Activated B cell treated with CpG ODN at 0.5 μM for 24 hours (primary cell): ENCODE measurements at regions of chr16 and their contacts with region 1.

Region 1: DNA sequence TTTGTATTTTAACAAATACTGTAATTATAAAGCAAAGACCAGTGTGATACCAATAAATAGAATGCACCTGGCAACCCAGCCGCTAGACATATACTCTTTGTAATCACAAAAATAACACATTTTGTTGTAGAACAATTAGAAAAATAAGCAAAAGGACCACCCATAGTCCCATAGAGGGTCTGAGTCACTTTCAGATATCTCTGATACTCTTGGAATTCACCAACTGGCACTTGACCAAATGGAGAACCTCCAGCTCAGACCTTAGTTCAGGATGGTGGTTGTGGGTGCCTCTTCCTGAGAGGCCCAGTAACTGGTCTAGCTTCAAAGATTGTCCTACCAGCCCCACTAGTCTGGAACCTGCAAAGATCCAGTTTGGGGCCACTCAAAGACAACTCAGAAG is 789 bp upstream of the TERF2 start:
- DNase-seq: no peak
- ATAC-seq: no peak
- H3K4me3 Mint-ChIP-seq: peak overlapping the region; percentile 90
- H3K27ac Mint-ChIP-seq: peak overlapping the region; percentile 89
- H3K4me1 Mint-ChIP-seq: peaks cover 36% of the 10 kb centered on the region
- H3K27me3 Mint-ChIP-seq: no peaks in the 10 kb centered on the region
- CTCF ChIP-seq: no peak

Region 2: DNA sequence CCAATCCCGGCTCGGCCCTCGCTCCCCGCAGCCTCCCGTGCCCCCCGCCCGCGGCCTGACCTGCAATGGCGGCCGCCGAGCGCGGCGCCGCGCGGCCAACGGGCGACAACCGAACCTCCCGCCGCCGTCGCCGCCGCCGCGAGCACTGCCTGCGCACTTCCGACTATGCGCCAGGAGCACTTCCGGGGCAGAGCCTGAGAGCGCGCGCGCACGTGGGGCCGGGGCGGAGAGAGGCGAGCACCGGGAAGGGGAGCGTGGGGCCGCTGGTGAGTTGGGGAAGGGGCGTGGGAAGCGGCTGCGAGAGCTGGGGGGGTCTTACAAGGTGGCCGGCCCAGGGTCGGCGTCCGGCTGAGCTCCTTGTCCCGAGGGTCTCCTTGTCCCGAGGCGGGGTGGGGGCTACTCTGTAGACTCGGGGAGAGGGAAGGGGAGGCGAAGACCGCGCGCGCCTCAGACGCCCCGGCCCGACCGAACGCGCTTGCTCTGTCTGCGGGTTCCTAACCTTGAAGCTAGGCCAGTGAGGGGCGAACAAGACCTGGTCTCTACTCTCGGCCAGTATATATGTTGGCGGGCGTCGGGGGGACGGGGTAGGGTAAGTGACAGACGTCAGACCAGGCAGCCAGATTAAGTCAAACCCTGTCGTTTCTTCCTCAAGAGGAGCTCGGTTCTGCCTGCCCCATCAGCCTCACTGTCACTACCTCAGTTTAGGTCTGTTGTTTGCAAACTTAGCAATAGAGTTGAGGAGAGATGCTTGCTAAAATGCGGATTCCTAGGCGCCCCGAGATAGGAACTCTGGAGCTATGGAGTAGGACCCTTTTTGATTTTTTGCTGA is 254.0 kb before region 1 on chr16 and contains the starts of genes CHTF8 and UTP4:
- CTCF ChIA-PET with region 1: no interaction called
- POLR2A ChIA-PET with region 1: no interaction called
- intact Hi-C with region 1: loop called (anchors 5 kb)
- DNase-seq: peak; percentile 89
- ATAC-seq: peak; percentile 85
- H3K4me3 Mint-ChIP-seq: peak within 1 kb of the TSS; percentile 94
- H3K27ac Mint-ChIP-seq: peak within 1 kb of the TSS; percentile 85
- H3K4me1 Mint-ChIP-seq: peaks cover 47% of the 10 kb centered on the region
- H3K27me3 Mint-ChIP-seq: no peaks in the 10 kb centered on the region
- CTCF ChIP-seq: no peak
- total RNA-seq, gene CHTF8: 134 and 143 TPM in 2 replicates
- total RNA-seq, gene UTP4: 53.5 and 55.3 TPM in 2 replicates

Region 3: DNA sequence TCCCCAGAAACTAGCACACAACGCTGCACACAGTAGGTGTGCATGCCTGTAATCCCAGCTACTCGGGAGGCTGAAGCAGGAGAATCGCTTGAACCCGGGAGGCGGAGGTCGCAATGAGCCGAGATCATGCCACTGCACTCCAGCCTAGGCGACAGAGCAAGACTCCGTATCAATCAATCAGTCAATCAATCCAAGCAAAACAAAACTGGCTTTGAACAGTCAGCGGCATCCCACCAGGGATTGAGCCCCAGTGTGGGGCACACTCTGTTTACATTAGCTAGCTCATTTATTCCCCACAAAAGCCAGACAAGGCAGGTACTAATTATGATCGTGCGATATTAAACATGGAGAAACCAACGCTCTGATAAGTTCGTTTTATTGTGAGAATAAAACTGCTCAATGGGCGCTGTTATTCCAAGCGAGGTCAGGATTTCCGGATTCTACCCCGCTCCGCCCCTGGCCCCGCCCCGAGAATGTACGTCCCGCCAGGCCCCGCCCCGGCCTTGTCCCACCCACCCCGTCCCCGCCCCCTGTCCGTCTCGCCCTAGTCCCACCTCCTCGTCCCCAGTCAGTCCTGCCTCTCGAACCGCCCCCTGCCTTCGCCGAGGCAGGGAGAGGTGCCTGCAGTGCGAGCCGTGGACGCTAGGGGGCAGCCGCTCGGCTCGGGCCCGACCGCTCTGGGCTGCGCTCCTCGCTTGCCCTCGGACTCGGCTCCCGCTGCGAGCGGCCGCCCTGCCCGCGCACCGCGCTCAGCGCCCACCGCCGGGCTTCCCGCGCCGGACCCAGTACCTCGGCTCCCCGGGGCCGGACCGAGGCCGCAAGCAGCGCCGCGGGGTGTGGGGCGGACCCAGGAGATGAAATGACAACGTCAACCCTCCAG is 75.7 kb before region 1 on chr16 and contains the start of gene VPS4A:
- CTCF ChIA-PET with region 1: no interaction called
- POLR2A ChIA-PET with region 1: no interaction called
- intact Hi-C with region 1: loop called (anchors 1 kb)
- DNase-seq: peak; percentile 99
- ATAC-seq: peak; percentile 98
- H3K4me3 Mint-ChIP-seq: peak within 1 kb of the TSS; percentile 98
- H3K27ac Mint-ChIP-seq: peak within 1 kb of the TSS; percentile 91
- H3K4me1 Mint-ChIP-seq: peaks cover 27% of the 10 kb centered on the region
- H3K27me3 Mint-ChIP-seq: no peaks in the 10 kb centered on the region
- CTCF ChIP-seq: no peak
- total RNA-seq, gene VPS4A: 34.2 and 41.7 TPM in 2 replicates

Region 4: DNA sequence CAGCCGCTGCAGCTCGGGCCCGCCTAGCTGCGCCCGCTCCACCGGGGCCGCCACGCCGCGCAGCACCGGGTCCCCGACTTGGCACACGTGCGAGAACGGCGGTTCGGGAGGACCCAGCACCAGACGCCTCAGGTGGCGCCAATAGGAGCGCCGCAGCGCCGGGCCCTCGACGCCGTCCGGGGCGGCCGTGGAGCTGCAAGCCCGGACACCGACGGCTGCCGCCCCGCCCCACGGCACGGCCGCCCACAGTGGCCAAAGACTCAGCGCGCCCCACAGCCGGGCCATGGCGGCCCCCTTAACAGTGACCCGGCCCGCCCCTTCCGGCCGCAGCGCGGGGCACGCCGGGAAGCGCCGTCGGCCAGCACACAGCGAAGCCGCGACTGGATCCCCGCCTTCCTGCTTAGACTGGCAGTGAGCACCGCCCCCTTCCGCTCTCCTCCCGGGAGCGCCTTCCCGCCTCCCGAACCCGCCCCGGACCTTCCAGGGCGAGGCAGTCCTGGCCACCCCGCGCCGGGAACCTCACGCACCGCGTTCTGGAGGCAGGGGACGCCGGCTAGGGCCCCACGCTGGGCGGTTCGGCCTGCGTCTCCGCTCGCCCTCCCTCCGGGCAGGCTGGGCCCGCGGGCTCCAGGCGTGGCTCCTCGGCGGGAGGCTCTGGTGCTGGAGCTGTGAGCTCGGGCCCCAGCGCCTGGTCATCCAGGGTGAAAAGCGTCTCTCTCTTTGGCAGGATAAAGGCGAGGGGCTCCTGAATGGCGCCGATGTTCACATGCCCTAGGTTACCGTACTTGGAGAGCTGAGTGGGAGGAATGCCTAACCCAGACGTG is 56.1 kb before region 1 on chr16 and contains the start of gene PDF:
- CTCF ChIA-PET with region 1: no interaction called
- POLR2A ChIA-PET with region 1: interaction called, 3 read pairs
- intact Hi-C with region 1: loop called (anchors 1 kb)
- DNase-seq: peak; percentile 85
- ATAC-seq: peak; percentile 96
- H3K4me3 Mint-ChIP-seq: peak within 1 kb of the TSS; percentile 84
- H3K27ac Mint-ChIP-seq: peak within 1 kb of the TSS; percentile 71
- H3K4me1 Mint-ChIP-seq: peaks cover 38% of the 10 kb centered on the region
- H3K27me3 Mint-ChIP-seq: no peaks in the 10 kb centered on the region
- CTCF ChIP-seq: no peak
- total RNA-seq, gene PDF: 11.1 and 15.3 TPM in 2 replicates

Region 5: DNA sequence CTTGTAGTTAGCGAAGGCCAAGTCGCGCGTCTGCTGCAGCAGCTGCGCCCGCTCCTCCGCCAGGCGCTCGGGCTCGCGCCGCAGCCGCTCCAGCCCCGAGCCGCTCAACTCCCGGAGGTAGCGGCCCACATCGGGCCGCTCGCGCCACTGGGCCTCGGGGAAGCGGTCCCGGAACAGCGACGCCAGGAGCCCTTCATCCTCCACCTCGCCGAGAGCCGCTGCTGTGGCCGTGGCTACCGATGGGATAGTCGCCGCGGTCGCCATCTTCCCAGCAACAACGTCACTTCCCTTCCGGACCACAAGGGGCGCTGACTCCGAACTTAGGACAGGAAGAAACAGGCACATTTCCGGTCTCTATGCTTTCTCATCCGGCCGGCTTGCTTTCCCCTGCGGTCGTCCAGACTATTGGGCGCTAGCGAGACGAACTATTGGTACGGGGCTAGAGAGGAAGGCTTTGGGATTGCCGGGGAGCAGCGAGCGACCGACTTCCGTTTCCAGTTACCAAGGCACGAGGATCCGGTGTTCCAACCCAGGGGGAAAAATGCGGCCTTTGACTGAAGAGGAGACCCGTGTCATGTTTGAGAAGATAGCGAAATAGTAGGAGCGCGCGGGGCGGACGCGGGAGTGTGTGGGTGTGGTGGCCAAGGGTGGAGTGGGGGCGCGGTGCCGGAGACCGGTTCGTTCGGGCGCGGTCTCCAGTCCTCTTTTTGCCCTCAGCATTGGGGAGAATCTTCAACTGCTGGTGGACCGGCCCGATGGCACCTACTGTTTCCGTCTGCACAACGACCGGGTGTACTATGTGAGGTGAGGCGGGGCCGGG is 47.1 kb before region 1 on chr16 and contains the starts of genes COG8 and NIP7:
- CTCF ChIA-PET with region 1: no interaction called
- POLR2A ChIA-PET with region 1: interaction called, 8 read pairs
- intact Hi-C with region 1: loop called (anchors 1 kb)
- DNase-seq: peak; percentile 87
- ATAC-seq: peak; percentile 91
- H3K4me3 Mint-ChIP-seq: peak within 1 kb of the TSS; percentile 100
- H3K27ac Mint-ChIP-seq: peak within 1 kb of the TSS; percentile 99
- H3K4me1 Mint-ChIP-seq: peaks cover 39% of the 10 kb centered on the region
- H3K27me3 Mint-ChIP-seq: no peaks in the 10 kb centered on the region
- CTCF ChIP-seq: no peak
- total RNA-seq, gene COG8: 40.5 and 45.4 TPM in 2 replicates
- total RNA-seq, gene NIP7: 42.4 and 44.3 TPM in 2 replicates

Region 6: GRCh38 chr16:69371564-69371963 is 15.0 kb before region 1 on chr16:
- CTCF ChIA-PET with region 1: no interaction called
- POLR2A ChIA-PET with region 1: no interaction called
- intact Hi-C with region 1: loop called (anchors 2 kb)
- DNase-seq: no peak
- ATAC-seq: peak; percentile 72
- H3K4me3 Mint-ChIP-seq: peak overlapping the region; percentile 52
- H3K27ac Mint-ChIP-seq: peak overlapping the region; percentile 85
- H3K4me1 Mint-ChIP-seq: peaks cover 36% of the 10 kb centered on the region
- H3K27me3 Mint-ChIP-seq: no peaks in the 10 kb centered on the region
- CTCF ChIP-seq: no peak

Region 7: DNA sequence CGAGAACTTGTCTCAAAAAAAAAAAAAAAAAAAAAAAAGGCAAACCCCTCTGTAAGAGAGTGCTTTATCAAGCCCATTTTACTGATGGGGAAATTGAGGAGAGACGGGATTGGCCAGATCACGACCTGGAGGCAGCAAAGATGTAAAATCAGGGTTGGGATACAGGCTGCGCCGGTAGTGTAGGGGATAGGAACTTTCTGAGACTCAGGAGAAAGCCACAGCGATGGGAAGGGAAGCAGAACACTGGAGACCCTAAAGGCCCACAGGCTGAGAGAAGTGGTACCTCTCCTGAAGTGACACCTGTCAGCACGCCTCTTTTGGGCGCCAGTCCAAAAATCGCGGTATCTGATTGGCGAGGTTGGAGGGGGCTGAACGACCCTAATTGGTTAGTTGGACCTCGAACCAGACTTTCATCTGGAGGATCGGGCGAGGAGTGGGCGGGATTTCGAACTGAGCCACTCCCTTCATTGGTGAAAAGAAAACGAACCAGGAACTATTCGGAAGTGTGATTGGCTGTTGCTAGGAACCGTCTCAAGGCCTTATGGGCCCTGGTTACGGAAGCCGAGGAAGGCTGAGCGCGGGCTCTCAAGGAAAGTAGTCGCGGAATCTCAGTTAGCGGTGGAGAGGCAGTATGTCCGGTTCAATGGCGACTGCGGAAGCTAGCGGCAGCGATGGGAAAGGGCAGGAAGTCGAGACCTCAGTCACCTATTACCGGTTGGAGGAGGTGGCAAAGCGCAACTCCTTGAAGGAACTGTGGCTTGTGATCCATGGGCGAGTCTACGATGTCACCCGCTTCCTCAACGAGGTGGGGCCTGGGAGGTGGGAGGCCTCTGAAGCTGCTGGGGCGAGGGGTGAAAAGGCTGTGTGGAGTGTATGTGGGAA is 37.7 kb after region 1 on chr16 and contains the start of gene CYB5B:
- CTCF ChIA-PET with region 1: no interaction called
- POLR2A ChIA-PET with region 1: interaction called, 6 read pairs
- intact Hi-C with region 1: loop called (anchors 1 kb)
- DNase-seq: peak; percentile 81
- ATAC-seq: peak; percentile 95
- H3K4me3 Mint-ChIP-seq: peak within 1 kb of the TSS; percentile 96
- H3K27ac Mint-ChIP-seq: peak within 1 kb of the TSS; percentile 91
- H3K4me1 Mint-ChIP-seq: peaks cover 24% of the 10 kb centered on the region
- H3K27me3 Mint-ChIP-seq: no peaks in the 10 kb centered on the region
- CTCF ChIP-seq: no peak
- total RNA-seq, gene CYB5B: 112 and 115 TPM in 2 replicates